ENCODE measurements at regions of chr13 and their contacts with region 1.

Region 1: GRCh38 chr13:37869756-37870488 is at the start of gene TRPC4:
- DNase-seq: peak; percentile 22
- H3K4me3 ChIP-seq: peak within 1 kb of the TSS; percentile 22 to 84 (median 66)
- H3K27ac ChIP-seq: no peak within 1 kb of the TSS
- H3K4me1 ChIP-seq: peaks cover 21% of the 10 kb centered on the region
- H3K27me3 ChIP-seq: peaks cover 16 to 24% of the 10 kb centered on the region in 2 experiments
- CTCF ChIP-seq: peak; percentile 11 to 16
- POLR2A ChIP-seq: no peak
- total RNA-seq, gene TRPC4: 0.42 and 0.64 TPM in 2 replicates

Region 2: GRCh38 chr13:37481011-37481884 is 388.7 kb before region 1 on chr13:
- CTCF ChIA-PET with region 1: no interaction called
- POLR2A ChIA-PET with region 1: no interaction called
- dilution Hi-C with region 1: no loop called
- intact Hi-C with region 1: no loop called
- DNase-seq: no peak
- H3K4me3 ChIP-seq: no peak overlapping the region
- H3K27ac ChIP-seq: no peak overlapping the region
- H3K4me1 ChIP-seq: no peaks in the 10 kb centered on the region
- H3K27me3 ChIP-seq: no peaks in the 10 kb centered on the region
- CTCF ChIP-seq: no peak
- POLR2A ChIP-seq: no peak

Region 3: GRCh38 chr13:37576601-37577000 is 293.3 kb before region 1 on chr13:
- CTCF ChIA-PET with region 1: no interaction called
- POLR2A ChIA-PET with region 1: interaction called, 10 read pairs
- dilution Hi-C with region 1: no loop called
- intact Hi-C with region 1: no loop called
- DNase-seq: no peak
- H3K4me3 ChIP-seq: no peak overlapping the region
- H3K27ac ChIP-seq: no peak overlapping the region
- H3K4me1 ChIP-seq: no peaks in the 10 kb centered on the region
- H3K27me3 ChIP-seq: no peaks in the 10 kb centered on the region
- CTCF ChIP-seq: no peak
- POLR2A ChIP-seq: no peak

Region 4: DNA sequence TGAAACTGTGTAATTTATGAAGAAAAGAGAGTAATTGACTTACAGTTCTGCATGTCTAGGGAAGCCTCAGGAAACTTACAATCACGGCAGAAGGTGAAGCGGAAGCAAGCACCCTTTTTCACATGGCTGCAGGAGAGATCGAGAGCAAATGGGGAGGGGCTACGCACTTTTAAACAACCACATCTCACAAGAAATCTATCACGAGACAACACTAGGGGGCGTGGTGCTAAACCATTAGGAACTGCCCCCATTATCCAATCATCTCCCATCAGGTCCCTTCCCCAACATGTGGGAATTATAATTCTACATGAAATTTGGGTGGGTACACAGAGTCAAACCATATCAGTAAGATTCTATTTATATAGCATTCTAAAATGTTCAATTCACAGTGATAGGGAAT is 114.4 kb after region 1 on chr13:
- CTCF ChIA-PET with region 1: no interaction called
- POLR2A ChIA-PET with region 1: no interaction called
- dilution Hi-C with region 1: no loop called
- intact Hi-C with region 1: no loop called
- DNase-seq: no peak
- H3K4me3 ChIP-seq: no peak overlapping the region
- H3K27ac ChIP-seq: no peak overlapping the region
- H3K4me1 ChIP-seq: no peaks in the 10 kb centered on the region
- H3K27me3 ChIP-seq: no peaks in the 10 kb centered on the region
- CTCF ChIP-seq: no peak
- POLR2A ChIP-seq: no peak

Region 5: DNA sequence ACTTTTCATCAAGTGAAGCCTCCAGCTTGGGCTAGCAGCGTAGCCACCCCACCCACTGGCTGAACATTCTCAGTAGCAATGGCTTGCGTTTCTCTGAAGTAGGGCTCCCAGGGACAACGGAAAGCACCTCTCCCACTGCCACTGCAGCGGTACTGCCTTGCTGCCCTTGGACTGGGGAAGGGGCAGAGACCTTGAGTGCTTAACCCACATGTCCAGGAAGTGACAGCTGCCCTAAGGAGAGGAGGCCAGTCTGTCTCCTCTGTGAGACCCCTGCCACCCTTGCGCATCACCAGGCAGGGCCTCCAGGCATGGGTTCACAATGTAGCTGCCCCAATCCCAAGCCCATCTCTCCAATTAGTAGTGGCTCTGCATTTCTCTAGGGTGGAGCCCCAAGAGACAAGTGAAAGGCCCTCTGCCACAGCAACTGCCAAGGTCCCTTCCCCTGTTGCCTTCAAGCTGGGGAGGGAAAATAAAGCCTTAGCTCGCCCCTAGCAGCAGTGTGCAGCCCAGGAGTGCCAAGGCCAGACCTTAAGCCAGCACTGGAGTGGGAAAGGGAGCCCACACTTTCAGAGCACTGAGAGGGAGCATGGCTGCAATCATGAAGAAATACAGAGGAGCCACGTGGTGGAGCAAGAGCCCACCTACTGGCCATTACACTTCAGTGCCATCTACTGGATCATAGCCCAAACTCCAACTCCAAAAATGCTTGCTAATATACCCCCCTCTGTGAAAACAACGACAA is 175.6 kb after region 1 on chr13:
- CTCF ChIA-PET with region 1: interaction called, 12 read pairs
- POLR2A ChIA-PET with region 1: no interaction called
- dilution Hi-C with region 1: no loop called
- intact Hi-C with region 1: loop called (anchors 10 kb)
- DNase-seq: peak; percentile 40
- H3K4me3 ChIP-seq: no peak overlapping the region
- H3K27ac ChIP-seq: no peak overlapping the region
- H3K4me1 ChIP-seq: no peaks in the 10 kb centered on the region
- H3K27me3 ChIP-seq: no peaks in the 10 kb centered on the region
- CTCF ChIP-seq: peak; percentile 61 to 73
- POLR2A ChIP-seq: no peak

Measured in endothelial cell of umbilical vein (primary cell).